ENCODE measurements at regions of chr5 and their contacts with region 1.

Region 1: DNA sequence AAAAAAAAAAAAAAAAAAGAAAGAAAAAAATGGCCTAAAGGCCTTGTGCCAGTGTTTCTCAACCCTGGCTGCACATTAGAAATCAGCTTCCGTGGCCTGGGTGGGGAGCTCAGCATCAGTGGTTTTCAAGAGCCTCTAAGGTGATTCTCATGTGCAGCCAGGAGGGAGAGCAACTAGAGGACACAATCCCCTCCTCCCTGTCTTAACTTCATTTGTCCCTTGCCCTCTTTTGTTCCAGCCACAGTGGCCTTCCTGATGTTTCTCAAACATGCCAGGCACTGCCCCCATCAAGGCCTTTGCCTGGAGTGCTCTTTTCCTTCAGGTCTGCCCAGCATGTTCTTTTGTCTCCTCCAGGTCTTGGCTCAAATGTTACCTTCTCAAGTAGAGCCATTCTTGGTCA is 42.4 kb downstream of the HOMER1 start:
- DNase-seq: no peak
- H3K4me3 ChIP-seq: no peak overlapping the region
- H3K27me3 ChIP-seq: no peaks in the 10 kb centered on the region
- CTCF ChIP-seq: no peak

Region 2: DNA sequence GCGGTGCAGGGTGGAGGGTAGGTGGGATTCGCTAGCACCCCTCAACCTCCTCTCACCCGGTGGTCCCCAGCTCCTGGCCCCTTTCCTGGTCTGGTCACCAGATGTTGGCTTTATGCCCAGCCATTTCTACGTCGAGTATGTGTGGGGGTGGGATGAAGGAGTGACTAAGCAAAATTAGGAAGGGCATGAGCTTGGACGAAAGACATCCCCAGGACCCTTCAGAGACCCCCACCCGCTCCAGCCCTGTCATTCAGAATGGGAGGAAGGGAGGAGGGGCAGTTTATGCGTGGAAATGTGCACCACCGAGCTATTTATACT is 401.2 kb before region 1 on chr5:
- CTCF ChIA-PET with region 1: no interaction called
- POLR2A ChIA-PET with region 1: interaction called, 13 read pairs
- DNase-seq: no peak
- H3K4me3 ChIP-seq: peak overlapping the region; percentile 31
- H3K27me3 ChIP-seq: no peaks in the 10 kb centered on the region
- CTCF ChIP-seq: no peak

Region 3: GRCh38 chr5:79318935-79319614 is 152.5 kb before region 1 on chr5:
- CTCF ChIA-PET with region 1: no interaction called
- POLR2A ChIA-PET with region 1: no interaction called
- DNase-seq: peak; percentile 76
- H3K4me3 ChIP-seq: no peak overlapping the region
- H3K27me3 ChIP-seq: no peaks in the 10 kb centered on the region
- CTCF ChIP-seq: no peak

Measured in BJ (cell line).